ENCODE measurements at regions of chr3 and their contacts with region 1.

Region 1: DNA sequence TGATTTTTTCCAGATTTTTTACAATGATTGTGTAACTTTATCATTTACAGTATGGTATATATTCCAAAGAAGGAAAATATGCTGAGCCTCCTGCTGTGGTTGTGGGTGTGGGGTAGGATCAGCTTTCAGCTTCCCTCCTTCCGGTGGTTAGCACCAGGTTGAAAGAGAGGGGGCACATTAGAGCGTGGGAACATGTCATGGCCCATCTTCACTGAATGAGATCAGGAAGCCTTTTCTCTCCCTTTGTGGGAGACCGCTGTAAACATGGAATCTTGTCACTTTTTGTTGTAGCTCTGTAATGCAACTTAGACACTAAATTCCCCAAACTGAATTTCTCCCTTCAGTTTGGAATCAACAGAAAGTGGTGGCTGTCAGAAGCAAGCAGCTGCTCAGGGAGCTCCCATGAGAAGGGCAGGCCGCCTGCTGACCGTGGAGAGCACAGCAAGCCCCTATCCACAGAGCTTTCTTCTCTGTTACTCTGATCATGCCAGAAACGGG is 86.7 kb upstream of the LIMD1 start:
- DNase-seq: peak in 2 of 9 experiments; percentile 9 to 20
- ATAC-seq: peak; percentile 42
- H3K4me3 ChIP-seq: no peak overlapping the region
- H3K4me3 Mint-ChIP-seq: no peak overlapping the region
- H3K27ac ChIP-seq: no peak overlapping the region
- H3K27ac Mint-ChIP-seq: no peak overlapping the region
- H3K4me1 ChIP-seq: peaks cover 12% of the 10 kb centered on the region
- H3K4me1 Mint-ChIP-seq: peaks cover 8% of the 10 kb centered on the region
- H3K27me3 ChIP-seq: no peaks in the 10 kb centered on the region
- H3K27me3 Mint-ChIP-seq: no peaks in the 10 kb centered on the region
- CTCF ChIP-seq: no peak

Region 2: GRCh38 chr3:45665101-45665572 is 157.3 kb after region 1 on chr3:
- CTCF ChIA-PET with region 1: interaction called, 256 read pairs
- POLR2A ChIA-PET with region 1: interaction called, 3 read pairs
- intact Hi-C with region 1: loop called in 1 of 2 experiments (anchors 1 kb)
- DNase-seq: peak; percentile 30 to 87 (median 64)
- ATAC-seq: peak; percentile 43
- H3K4me3 ChIP-seq: peak overlapping the region; percentile 60 to 63
- H3K4me3 Mint-ChIP-seq: peak overlapping the region; percentile 90
- H3K27ac ChIP-seq: peak overlapping the region; percentile 60 to 61
- H3K27ac Mint-ChIP-seq: peak overlapping the region; percentile 92
- H3K4me1 ChIP-seq: peaks cover 19% of the 10 kb centered on the region
- H3K4me1 Mint-ChIP-seq: peaks cover 25% of the 10 kb centered on the region
- H3K27me3 ChIP-seq: no peaks in the 10 kb centered on the region
- H3K27me3 Mint-ChIP-seq: no peaks in the 10 kb centered on the region
- CTCF ChIP-seq: peak; percentile 56

Region 3: GRCh38 chr3:45826321-45826720 is 318.5 kb after region 1 on chr3:
- CTCF ChIA-PET with region 1: no interaction called
- POLR2A ChIA-PET with region 1: no interaction called
- intact Hi-C with region 1: loop called in 1 of 2 experiments (anchors 5 kb)
- DNase-seq: no peak
- ATAC-seq: no peak
- H3K4me3 ChIP-seq: no peak overlapping the region
- H3K4me3 Mint-ChIP-seq: no peak overlapping the region
- H3K27ac ChIP-seq: no peak overlapping the region
- H3K27ac Mint-ChIP-seq: no peak overlapping the region
- H3K4me1 ChIP-seq: no peaks in the 10 kb centered on the region
- H3K4me1 Mint-ChIP-seq: no peaks in the 10 kb centered on the region
- H3K27me3 ChIP-seq: no peaks in the 10 kb centered on the region
- H3K27me3 Mint-ChIP-seq: no peaks in the 10 kb centered on the region
- CTCF ChIP-seq: no peak

Region 4: DNA sequence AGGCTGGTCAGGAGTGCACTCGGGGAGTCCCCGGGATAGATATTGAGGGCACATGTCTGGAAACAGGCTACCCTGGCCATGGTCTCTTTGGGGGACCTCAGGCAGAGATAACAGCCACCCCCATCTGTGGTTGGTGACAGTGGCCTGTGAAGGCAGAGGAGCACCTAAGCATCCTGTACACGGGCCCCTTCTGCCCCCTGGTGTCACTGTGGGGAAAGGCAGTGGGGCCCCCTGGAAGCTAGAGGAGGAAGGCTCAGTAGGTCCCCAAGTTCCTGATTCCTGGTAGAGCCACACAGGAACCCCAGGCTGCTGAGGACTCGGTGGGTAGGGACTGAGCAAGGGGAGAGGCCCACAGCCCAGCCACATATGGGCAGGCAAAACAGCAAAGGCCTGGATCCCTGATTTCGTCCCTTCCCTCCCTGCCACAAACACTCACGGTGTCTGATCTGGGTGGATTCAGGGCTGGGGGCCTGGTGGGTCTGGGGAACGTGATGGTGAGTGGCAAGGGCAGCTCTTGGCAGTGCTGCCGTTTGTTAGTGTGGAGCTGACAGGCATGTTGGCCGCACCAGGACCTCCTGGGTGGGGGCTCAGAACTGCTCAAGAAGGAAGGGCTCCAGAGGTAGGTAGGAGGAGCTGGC is 421.3 kb after region 1 on chr3:
- CTCF ChIA-PET with region 1: interaction called, 7 read pairs
- POLR2A ChIA-PET with region 1: no interaction called
- intact Hi-C with region 1: loop called (anchors 1 to 2 kb)
- DNase-seq: peak; percentile 39 to 78 (median 66)
- ATAC-seq: peak; percentile 97
- H3K4me3 ChIP-seq: no peak overlapping the region
- H3K4me3 Mint-ChIP-seq: no peak overlapping the region
- H3K27ac ChIP-seq: no peak overlapping the region
- H3K27ac Mint-ChIP-seq: peak overlapping the region; percentile 63
- H3K4me1 ChIP-seq: no peaks in the 10 kb centered on the region
- H3K4me1 Mint-ChIP-seq: peaks cover 4% of the 10 kb centered on the region
- H3K27me3 ChIP-seq: no peaks in the 10 kb centered on the region
- H3K27me3 Mint-ChIP-seq: no peaks in the 10 kb centered on the region
- CTCF ChIP-seq: peak; percentile 72